Activated B cell treated with CpG ODN at 0.5 μM for 24 hours (primary cell): ENCODE measurements at regions of chr6 and their contacts with region 1.

Region 1: DNA sequence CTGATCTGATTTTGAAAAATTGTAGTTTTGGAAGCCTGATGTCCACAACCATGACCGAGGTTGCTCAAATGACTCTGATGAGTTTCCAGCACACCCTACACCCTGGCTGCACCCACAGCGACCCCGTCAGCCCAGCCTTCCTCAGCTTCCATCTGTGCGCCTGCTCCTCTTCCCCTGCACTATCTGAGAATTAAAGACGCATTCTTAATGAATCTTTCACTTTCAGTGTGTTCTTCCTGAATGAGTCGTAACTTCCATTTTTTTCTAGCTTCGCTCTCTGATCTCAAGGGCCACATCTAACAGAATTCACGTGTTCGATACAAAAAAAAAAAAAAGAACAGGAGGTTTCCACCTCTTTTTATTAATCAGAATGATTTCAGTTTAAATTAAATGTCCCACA is 21.3 kb upstream of the RREB1 start:
- DNase-seq: peak; percentile 35
- ATAC-seq: peak; percentile 87
- H3K4me3 Mint-ChIP-seq: peak overlapping the region; percentile 83
- H3K27ac Mint-ChIP-seq: peak overlapping the region; percentile 89
- H3K4me1 Mint-ChIP-seq: peaks cover 30% of the 10 kb centered on the region
- H3K27me3 Mint-ChIP-seq: no peaks in the 10 kb centered on the region
- CTCF ChIP-seq: no peak

Region 2: GRCh38 chr6:6758915-6759654 is 327.4 kb before region 1 on chr6:
- CTCF ChIA-PET with region 1: interaction called, 16 read pairs
- POLR2A ChIA-PET with region 1: interaction called, 4 read pairs
- intact Hi-C with region 1: loop called (anchors 1 kb)
- DNase-seq: peak; percentile 22
- ATAC-seq: peak; percentile 88
- H3K4me3 Mint-ChIP-seq: no peak overlapping the region
- H3K27ac Mint-ChIP-seq: no peak overlapping the region
- H3K4me1 Mint-ChIP-seq: peaks cover 21% of the 10 kb centered on the region
- H3K27me3 Mint-ChIP-seq: peaks cover 9% of the 10 kb centered on the region
- CTCF ChIP-seq: no peak

Region 3: GRCh38 chr6:6803572-6803971 is 282.9 kb before region 1 on chr6:
- CTCF ChIA-PET with region 1: interaction called, 7 read pairs
- POLR2A ChIA-PET with region 1: interaction called, 3 read pairs
- intact Hi-C with region 1: loop called (anchors 5 kb)
- DNase-seq: peak; percentile 56
- ATAC-seq: peak; percentile 85
- H3K4me3 Mint-ChIP-seq: peak overlapping the region; percentile 4
- H3K27ac Mint-ChIP-seq: peak overlapping the region; percentile 42
- H3K4me1 Mint-ChIP-seq: peaks cover 79% of the 10 kb centered on the region
- H3K27me3 Mint-ChIP-seq: no peaks in the 10 kb centered on the region
- CTCF ChIP-seq: no peak

Region 4: DNA sequence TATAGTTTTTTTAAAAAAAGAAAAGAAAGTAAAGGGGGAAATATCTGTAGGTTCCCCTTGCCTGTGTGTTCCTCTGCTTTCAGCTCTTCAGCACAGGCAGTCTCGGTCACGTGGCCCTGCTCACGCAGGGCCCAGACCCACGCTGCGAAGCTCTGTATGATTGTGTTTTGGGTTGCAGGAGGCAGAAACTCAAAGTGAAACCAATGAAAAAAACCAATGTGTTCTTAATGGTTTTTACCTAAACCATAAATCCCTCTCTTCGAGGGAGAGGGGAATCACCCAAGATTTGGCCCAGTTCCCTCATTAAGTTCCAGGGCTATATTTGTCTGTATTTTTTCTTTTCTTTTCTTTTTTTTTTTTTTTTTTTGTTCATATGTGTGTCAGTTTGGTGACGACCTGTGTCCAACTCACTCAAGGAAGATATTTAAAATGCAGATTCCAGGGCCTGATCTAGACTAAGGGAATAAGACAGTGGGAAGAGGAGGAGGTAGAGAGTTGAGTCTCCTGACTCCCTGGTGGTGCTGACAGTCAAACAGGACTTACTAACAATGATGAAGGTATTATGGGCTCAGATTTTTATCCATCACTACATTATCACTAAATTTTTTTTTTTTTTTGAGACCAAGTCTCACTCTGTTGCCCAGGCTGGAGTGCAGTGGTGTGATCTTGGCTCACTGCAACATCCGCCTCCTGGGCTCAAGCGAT is 12.5 kb before region 1 on chr6:
- CTCF ChIA-PET with region 1: interaction called, 4 read pairs
- POLR2A ChIA-PET with region 1: interaction called, 39 read pairs
- intact Hi-C with region 1: loop called (anchors 1 kb)
- DNase-seq: peak; percentile 58
- ATAC-seq: peak; percentile 98
- H3K4me3 Mint-ChIP-seq: peak overlapping the region; percentile 57
- H3K27ac Mint-ChIP-seq: peak overlapping the region; percentile 87
- H3K4me1 Mint-ChIP-seq: peaks cover 28% of the 10 kb centered on the region
- H3K27me3 Mint-ChIP-seq: no peaks in the 10 kb centered on the region
- CTCF ChIP-seq: no peak